K562 (cell line): ENCODE measurements at regions of chr1 and their contacts with region 1.

Region 1: GRCh38 chr1:37890378-37891014 is 31.1 kb upstream of the MTF1 start:
- DNase-seq: peak; percentile 50 to 67 (median 58)
- ATAC-seq: peak; percentile 84
- H3K4me3 ChIP-seq: no peak overlapping the region
- H3K27ac ChIP-seq: no peak overlapping the region
- H3K4me1 ChIP-seq: peaks cover 0 to 9% of the 10 kb centered on the region in 2 experiments; a peak in 2 of 5 replicates
- H3K27me3 ChIP-seq: no peaks in the 10 kb centered on the region
- CTCF ChIP-seq: peak; percentile 49 to 92 (median 56); a peak in 5 of 6 replicates
- EP300 ChIP-seq: no peak
- POLR2A ChIP-seq: no peak
- RAD21 ChIP-seq: peak; percentile 77 to 83

Region 2: GRCh38 chr1:37914719-37915475 is 24.4 kb after region 1 on chr1:
- CTCF ChIA-PET with region 1: no interaction called
- POLR2A ChIA-PET with region 1: no interaction called
- in situ Hi-C with region 1: no loop called
- intact Hi-C with region 1: loop called (anchors 2 kb)
- DNase-seq: no peak
- ATAC-seq: peak; percentile 39
- H3K4me3 ChIP-seq: no peak overlapping the region
- H3K27ac ChIP-seq: peak overlapping the region; percentile 9; the same call in 1 of the 3 replicates
- H3K4me1 ChIP-seq: peaks cover 11 to 23% of the 10 kb centered on the region in 2 experiments; a peak in 4 of 5 replicates
- H3K27me3 ChIP-seq: no peaks in the 10 kb centered on the region
- CTCF ChIP-seq: no peak
- EP300 ChIP-seq: no peak
- POLR2A ChIP-seq: no peak
- RAD21 ChIP-seq: no peak

Region 3: DNA sequence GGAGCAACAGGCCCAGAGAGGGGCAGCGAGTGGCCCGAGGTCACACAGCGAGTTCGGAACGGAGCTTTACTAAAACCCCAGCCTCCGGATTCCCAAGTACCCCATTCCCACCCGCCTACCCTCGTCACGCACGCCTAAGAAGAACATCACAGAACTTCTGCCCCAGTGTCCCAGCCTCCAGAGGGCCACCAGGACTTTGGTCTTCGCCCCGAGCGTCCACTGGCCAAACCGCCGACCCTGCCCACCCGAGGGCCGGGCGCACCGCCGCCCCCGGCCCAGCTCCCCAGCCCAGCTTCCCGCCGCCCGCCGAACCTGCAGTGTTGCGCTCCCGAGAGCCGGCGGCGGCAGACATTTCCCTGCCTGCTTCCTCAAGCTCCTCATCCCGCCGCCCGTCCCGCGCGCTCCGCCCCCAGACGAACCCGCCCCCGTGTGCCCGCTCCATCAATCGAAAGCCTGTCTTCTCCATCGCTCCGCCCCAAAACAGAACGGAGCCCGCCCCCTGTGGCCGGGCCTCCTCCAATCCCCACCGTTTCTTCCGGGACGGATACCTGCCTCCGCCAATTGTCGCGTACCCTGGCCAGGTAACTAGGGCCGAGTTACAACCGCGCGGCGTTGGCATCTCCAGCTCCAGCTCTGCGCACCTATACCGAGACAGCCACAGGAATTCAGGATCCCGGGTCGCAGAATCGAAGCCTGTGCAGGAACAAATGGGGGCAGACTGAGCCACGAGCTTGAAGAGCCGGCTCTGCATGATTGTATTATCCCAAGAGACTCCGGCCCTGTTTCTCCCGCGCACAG is 41.1 kb after region 1 on chr1:
- CTCF ChIA-PET with region 1: no interaction called
- POLR2A ChIA-PET with region 1: interaction called, 3 read pairs
- in situ Hi-C with region 1: no loop called
- intact Hi-C with region 1: loop called (anchors 5 kb)
- DNase-seq: peak; percentile 98 to 100 (median 98)
- ATAC-seq: peak; percentile 98
- H3K4me3 ChIP-seq: peak overlapping the region; percentile 82
- H3K27ac ChIP-seq: peak overlapping the region; percentile 80
- H3K4me1 ChIP-seq: peaks cover 28 to 32% of the 10 kb centered on the region in 2 experiments; a peak in 4 of 5 replicates
- H3K27me3 ChIP-seq: no peaks in the 10 kb centered on the region
- CTCF ChIP-seq: 0 out of 6 replicates have a peak, but pooled peaks of 1 of the 3 experiments have one; percentile 5
- EP300 ChIP-seq: 0 out of 2 replicates have a peak, but pooled peaks have one; percentile 14
- POLR2A ChIP-seq: peak; percentile 78
- RAD21 ChIP-seq: peak in 1 of 2 experiments; percentile 11; a peak in 1 of 4 replicates

Region 4: GRCh38 chr1:37978541-37978940 is 88.0 kb after region 1 on chr1:
- CTCF ChIA-PET with region 1: interaction called, 18 read pairs
- POLR2A ChIA-PET with region 1: no interaction called
- in situ Hi-C with region 1: no loop called
- intact Hi-C with region 1: loop called (anchors 1 kb)
- DNase-seq: no peak
- ATAC-seq: no peak
- H3K4me3 ChIP-seq: no peak overlapping the region
- H3K27ac ChIP-seq: no peak overlapping the region
- H3K4me1 ChIP-seq: no peaks in the 10 kb centered on the region
- H3K27me3 ChIP-seq: no peaks in the 10 kb centered on the region
- CTCF ChIP-seq: no peak
- EP300 ChIP-seq: no peak
- POLR2A ChIP-seq: no peak
- RAD21 ChIP-seq: no peak

Region 5: DNA sequence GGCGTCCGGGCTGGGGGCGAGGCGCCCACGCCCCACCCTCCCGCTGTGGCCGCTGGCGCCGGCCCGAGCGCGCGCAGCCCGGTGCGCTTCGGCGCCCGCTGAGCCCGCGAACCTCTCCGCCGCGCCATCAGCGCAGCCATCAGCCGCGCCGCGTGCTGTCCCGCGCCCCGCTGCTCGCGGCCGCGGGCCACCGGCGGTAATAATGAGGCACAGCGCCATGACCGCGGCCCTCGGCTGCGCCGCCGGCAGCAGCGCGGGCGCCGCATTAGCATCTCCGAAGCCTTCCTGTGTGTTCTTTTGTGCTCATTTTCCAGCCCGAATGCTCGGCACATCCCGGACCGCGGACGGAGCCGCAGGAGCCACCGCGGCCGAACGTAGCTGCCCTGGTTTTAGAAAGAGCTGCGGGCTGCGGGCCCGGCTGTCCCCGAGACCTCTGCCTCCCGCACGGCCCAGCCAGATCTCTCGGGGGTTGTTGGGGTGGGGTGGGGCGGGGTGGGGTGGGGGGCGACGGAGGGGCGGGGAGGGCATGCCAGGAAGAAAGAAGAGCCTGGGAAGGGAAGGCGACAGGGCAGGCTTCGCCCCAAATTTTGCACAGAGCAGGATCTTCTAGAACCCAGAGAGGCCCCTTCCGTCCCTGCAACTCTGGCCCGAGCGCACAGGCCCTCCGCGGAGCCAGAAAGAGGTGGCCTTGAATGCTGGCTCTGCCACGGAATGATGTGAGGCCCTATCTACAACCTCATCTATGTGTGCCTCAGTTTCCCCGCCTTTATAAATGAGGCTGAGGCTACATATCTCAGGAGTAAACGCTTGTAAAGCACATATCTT is 913.8 kb after region 1 on chr1:
- CTCF ChIA-PET with region 1: no interaction called
- POLR2A ChIA-PET with region 1: no interaction called
- in situ Hi-C with region 1: no loop called
- intact Hi-C with region 1: no loop called
- DNase-seq: no peak
- ATAC-seq: no peak; the same call in 1 of the 3 replicates
- H3K4me3 ChIP-seq: peak overlapping the region; percentile 7; the same call in 1 of the 2 replicates
- H3K27ac ChIP-seq: no peak overlapping the region
- H3K4me1 ChIP-seq: peaks cover 0 to 21% of the 10 kb centered on the region in 2 experiments; a peak in 2 of 5 replicates
- H3K27me3 ChIP-seq: no peaks in the 10 kb centered on the region; a peak in 1 of 5 replicates
- CTCF ChIP-seq: no peak
- EP300 ChIP-seq: no peak
- POLR2A ChIP-seq: no peak
- RAD21 ChIP-seq: no peak